ENCODE measurements at regions of chr5 and their contacts with region 1.

Region 1: GRCh38 chr5:177022384-177023308 is at the start of gene ZNF346:
- DNase-seq: peak; percentile 95
- ATAC-seq: peak; percentile 98
- H3K4me3 ChIP-seq: peak within 1 kb of the TSS; percentile 69 to 96 (median 96)
- H3K4me3 Mint-ChIP-seq: peak within 1 kb of the TSS; percentile 98
- H3K27ac ChIP-seq: peak within 1 kb of the TSS; percentile 66 to 92
- H3K27ac Mint-ChIP-seq: peak within 1 kb of the TSS; percentile 96
- H3K4me1 ChIP-seq: peaks cover 15 to 17% of the 10 kb centered on the region in 2 donors
- H3K4me1 Mint-ChIP-seq: peaks cover 38% of the 10 kb centered on the region
- H3K27me3 ChIP-seq: no peaks in the 10 kb centered on the region
- H3K27me3 Mint-ChIP-seq: no peaks in the 10 kb centered on the region
- CTCF ChIP-seq: peak; percentile 44
- total RNA-seq, gene ZNF346: 38.4 and 47.1 TPM in 2 replicates

Region 2: GRCh38 chr5:175617447-175617846 is 1405.2 kb before region 1 on chr5:
- CTCF ChIA-PET with region 1: no interaction called
- POLR2A ChIA-PET with region 1: no interaction called
- intact Hi-C with region 1: no loop called
- DNase-seq: no peak
- ATAC-seq: no peak
- H3K4me3 ChIP-seq: no peak overlapping the region
- H3K4me3 Mint-ChIP-seq: no peak overlapping the region
- H3K27ac ChIP-seq: no peak overlapping the region
- H3K27ac Mint-ChIP-seq: no peak overlapping the region
- H3K4me1 ChIP-seq: no peaks in the 10 kb centered on the region
- H3K4me1 Mint-ChIP-seq: no peaks in the 10 kb centered on the region
- H3K27me3 ChIP-seq: no peaks in the 10 kb centered on the region
- H3K27me3 Mint-ChIP-seq: peaks cover 5% of the 10 kb centered on the region
- CTCF ChIP-seq: no peak

Region 3: GRCh38 chr5:176844706-176845391 is 177.8 kb before region 1 on chr5:
- CTCF ChIA-PET with region 1: no interaction called
- POLR2A ChIA-PET with region 1: no interaction called
- intact Hi-C with region 1: no loop called
- DNase-seq: no peak
- ATAC-seq: no peak
- H3K4me3 ChIP-seq: no peak overlapping the region
- H3K4me3 Mint-ChIP-seq: no peak overlapping the region
- H3K27ac ChIP-seq: no peak overlapping the region
- H3K27ac Mint-ChIP-seq: peak overlapping the region; percentile 26
- H3K4me1 ChIP-seq: no peaks in the 10 kb centered on the region
- H3K4me1 Mint-ChIP-seq: no peaks in the 10 kb centered on the region
- H3K27me3 ChIP-seq: peaks cover 0 to 27% (median 1%) of the 10 kb centered on the region in 4 experiments
- H3K27me3 Mint-ChIP-seq: peaks cover 27% of the 10 kb centered on the region
- CTCF ChIP-seq: no peak

Region 4: GRCh38 chr5:176985516-176985915 is 37.1 kb before region 1 on chr5:
- CTCF ChIA-PET with region 1: interaction called, 6 read pairs
- POLR2A ChIA-PET with region 1: interaction called, 6 read pairs
- intact Hi-C with region 1: loop called (anchors 1 kb)
- DNase-seq: peak; percentile 78
- ATAC-seq: peak; percentile 97
- H3K4me3 ChIP-seq: peak overlapping the region in 1 of 5 experiments; percentile 30
- H3K4me3 Mint-ChIP-seq: peak overlapping the region; percentile 78
- H3K27ac ChIP-seq: peak overlapping the region; percentile 65 to 71
- H3K27ac Mint-ChIP-seq: peak overlapping the region; percentile 89
- H3K4me1 ChIP-seq: peaks cover 41 to 45% of the 10 kb centered on the region in 2 donors
- H3K4me1 Mint-ChIP-seq: peaks cover 46% of the 10 kb centered on the region
- H3K27me3 ChIP-seq: no peaks in the 10 kb centered on the region
- H3K27me3 Mint-ChIP-seq: no peaks in the 10 kb centered on the region
- CTCF ChIP-seq: no peak

Region 5: DNA sequence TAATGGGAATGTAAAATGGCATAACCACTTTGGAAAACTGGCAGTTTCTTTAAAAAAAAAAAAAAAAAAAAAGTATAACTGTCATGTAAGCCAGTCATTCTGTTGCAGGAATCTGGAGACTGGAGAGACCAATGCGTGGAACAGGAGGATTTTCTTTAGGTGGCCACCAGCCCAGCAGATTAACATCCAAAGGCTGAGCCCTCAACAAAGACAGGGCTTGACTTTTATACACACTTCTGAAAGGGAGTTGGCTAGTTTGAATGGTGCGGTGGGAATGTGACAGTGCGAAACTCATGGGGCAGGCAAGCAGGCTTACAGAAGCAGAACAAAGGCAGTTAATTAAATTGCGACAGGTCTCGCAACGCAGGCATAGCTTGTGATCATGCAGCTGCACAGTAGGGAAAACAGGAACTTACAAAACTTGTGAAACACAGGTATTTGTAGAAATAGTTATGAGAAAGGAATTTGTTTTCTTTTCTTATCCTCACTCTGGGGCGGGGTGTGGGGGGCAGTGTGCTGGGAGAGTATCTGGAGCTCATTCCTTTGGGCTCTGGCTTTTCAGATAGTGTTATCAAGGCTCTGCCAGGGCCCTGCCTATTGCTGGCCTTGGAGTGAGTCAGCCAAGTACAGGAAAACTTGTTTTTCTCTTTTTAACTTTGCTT is 28.1 kb before region 1 on chr5:
- CTCF ChIA-PET with region 1: interaction called, 5 read pairs
- POLR2A ChIA-PET with region 1: no interaction called
- intact Hi-C with region 1: loop called (anchors 1 kb)
- DNase-seq: peak; percentile 85
- ATAC-seq: peak; percentile 95
- H3K4me3 ChIP-seq: peak overlapping the region in 2 of 5 experiments; percentile 30 to 52
- H3K4me3 Mint-ChIP-seq: peak overlapping the region; percentile 79
- H3K27ac ChIP-seq: peak overlapping the region; percentile 85 to 90
- H3K27ac Mint-ChIP-seq: peak overlapping the region; percentile 95
- H3K4me1 ChIP-seq: peaks cover 61 to 64% of the 10 kb centered on the region in 2 donors
- H3K4me1 Mint-ChIP-seq: peaks cover 61% of the 10 kb centered on the region
- H3K27me3 ChIP-seq: no peaks in the 10 kb centered on the region
- H3K27me3 Mint-ChIP-seq: no peaks in the 10 kb centered on the region
- CTCF ChIP-seq: no peak

Region 6: DNA sequence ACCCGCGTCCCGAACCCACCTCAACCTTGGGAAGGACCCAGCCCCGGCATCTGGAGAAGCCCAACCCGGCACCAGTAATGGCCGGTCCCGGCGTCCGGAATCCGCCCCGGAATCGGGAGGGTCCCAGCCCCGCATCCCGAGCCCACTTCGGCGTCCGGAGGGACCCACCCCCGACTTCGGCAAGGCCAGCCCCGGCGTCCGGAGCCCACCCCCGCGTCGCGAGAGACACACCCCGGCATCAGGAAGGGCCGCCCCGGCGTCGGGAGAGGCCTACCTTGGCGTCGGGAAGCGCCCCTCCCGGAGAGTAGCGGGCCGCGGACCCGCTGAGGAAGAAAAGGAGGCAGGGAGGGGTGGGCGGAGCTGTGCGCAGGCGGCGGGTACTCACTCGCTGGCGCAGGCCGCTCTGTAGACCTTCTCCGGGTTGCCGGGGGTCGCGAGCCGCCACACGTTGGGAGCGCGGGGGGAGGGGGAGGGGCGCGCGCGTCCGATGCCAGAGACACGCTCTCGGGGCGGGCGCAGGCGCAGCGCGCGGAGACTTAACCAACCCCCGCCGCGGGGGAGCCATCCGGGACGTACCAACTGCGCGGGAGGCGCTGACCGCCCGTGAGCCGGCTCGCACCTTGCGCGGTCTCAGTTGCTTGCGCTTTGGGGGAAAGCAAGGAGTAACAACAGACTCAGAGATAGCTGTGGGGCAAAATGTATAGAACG is 16.2 kb before region 1 on chr5 and contains the start of gene UIMC1:
- CTCF ChIA-PET with region 1: interaction called, 5 read pairs
- POLR2A ChIA-PET with region 1: interaction called, 4 read pairs
- intact Hi-C with region 1: loop called (anchors 1 kb)
- DNase-seq: peak; percentile 96
- ATAC-seq: peak; percentile 90
- H3K4me3 ChIP-seq: peak within 1 kb of the TSS; percentile 74 to 100 (median 95)
- H3K4me3 Mint-ChIP-seq: peak within 1 kb of the TSS; percentile 96
- H3K27ac ChIP-seq: peak within 1 kb of the TSS; percentile 90 to 94
- H3K27ac Mint-ChIP-seq: peak within 1 kb of the TSS; percentile 96
- H3K4me1 ChIP-seq: peaks cover 19 to 29% of the 10 kb centered on the region in 2 donors
- H3K4me1 Mint-ChIP-seq: peaks cover 32% of the 10 kb centered on the region
- H3K27me3 ChIP-seq: no peaks in the 10 kb centered on the region
- H3K27me3 Mint-ChIP-seq: no peaks in the 10 kb centered on the region
- CTCF ChIP-seq: no peak
- total RNA-seq, gene UIMC1: 83.5 and 98.1 TPM in 2 replicates

Region 7: GRCh38 chr5:177040814-177041420 is 18.3 kb after region 1 on chr5:
- CTCF ChIA-PET with region 1: no interaction called
- POLR2A ChIA-PET with region 1: no interaction called
- intact Hi-C with region 1: loop called (anchors 2 kb)
- DNase-seq: no peak
- ATAC-seq: no peak
- H3K4me3 ChIP-seq: no peak overlapping the region
- H3K4me3 Mint-ChIP-seq: no peak overlapping the region
- H3K27ac ChIP-seq: no peak overlapping the region
- H3K27ac Mint-ChIP-seq: no peak overlapping the region
- H3K4me1 ChIP-seq: peaks cover 2 to 4% of the 10 kb centered on the region in 2 donors
- H3K4me1 Mint-ChIP-seq: peaks cover 7% of the 10 kb centered on the region
- H3K27me3 ChIP-seq: no peaks in the 10 kb centered on the region
- H3K27me3 Mint-ChIP-seq: no peaks in the 10 kb centered on the region
- CTCF ChIP-seq: no peak

Region 8: GRCh38 chr5:177071666-177072385 is 49.2 kb after region 1 on chr5:
- CTCF ChIA-PET with region 1: interaction called, 8 read pairs
- POLR2A ChIA-PET with region 1: no interaction called
- intact Hi-C with region 1: loop called (anchors 2 kb)
- DNase-seq: peak; percentile 90
- ATAC-seq: peak; percentile 88
- H3K4me3 ChIP-seq: peak overlapping the region in 3 of 5 experiments; percentile 11 to 25 (median 23)
- H3K4me3 Mint-ChIP-seq: peak overlapping the region; percentile 64
- H3K27ac ChIP-seq: peak overlapping the region; percentile 11 to 79
- H3K27ac Mint-ChIP-seq: peak overlapping the region; percentile 66
- H3K4me1 ChIP-seq: peaks cover 25 to 33% of the 10 kb centered on the region in 2 donors
- H3K4me1 Mint-ChIP-seq: peaks cover 31% of the 10 kb centered on the region
- H3K27me3 ChIP-seq: no peaks in the 10 kb centered on the region
- H3K27me3 Mint-ChIP-seq: no peaks in the 10 kb centered on the region
- CTCF ChIP-seq: peak; percentile 95

Measured in B cell (primary cell).